Right cardiac atrium (tissue), 5 donors: ENCODE measurements at regions of chr19 and their contacts with region 1.

Region 1: GRCh38 chr19:44903602-44904425 is 1.8 kb upstream of the APOE start:
- DNase-seq: peak; percentile 66 to 90 (median 89)
- ATAC-seq: peak; percentile 58 to 67
- H3K4me3 ChIP-seq: no peak overlapping the region
- H3K27ac ChIP-seq: no peak overlapping the region
- H3K4me1 ChIP-seq: no peaks in the 10 kb centered on the region
- H3K27me3 ChIP-seq: no peaks in the 10 kb centered on the region

Region 2: GRCh38 chr19:44677019-44677821 is 226.6 kb before region 1 on chr19:
- intact Hi-C with region 1: no loop called
- DNase-seq: no peak
- ATAC-seq: no peak
- H3K4me3 ChIP-seq: no peak overlapping the region
- H3K27ac ChIP-seq: no peak overlapping the region
- H3K4me1 ChIP-seq: no peaks in the 10 kb centered on the region
- H3K27me3 ChIP-seq: no peaks in the 10 kb centered on the region

Region 3: DNA sequence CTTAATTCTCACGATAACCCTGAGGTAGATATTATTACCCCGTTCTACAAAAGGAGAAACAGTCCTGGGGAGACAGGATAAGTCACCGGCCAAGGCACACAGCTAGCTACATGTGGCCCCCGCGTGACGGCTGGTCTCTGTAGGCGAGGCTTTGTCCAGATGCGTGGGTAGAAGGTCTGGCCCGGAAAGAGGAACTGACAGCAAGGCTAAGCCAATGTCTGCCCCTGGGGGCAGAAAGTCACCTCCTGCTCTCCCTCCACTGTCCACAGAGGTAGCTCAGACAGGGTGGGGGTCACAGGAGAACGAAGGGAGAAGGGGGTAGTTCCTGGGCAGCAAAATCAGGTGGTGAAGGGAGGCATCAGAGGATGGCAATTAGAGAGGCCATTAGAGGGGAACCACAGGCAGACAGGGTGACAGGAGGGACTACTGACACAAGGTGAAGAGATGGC is 40.0 kb after region 1 on chr19:
- intact Hi-C with region 1: loop called in 2 of 4 experiments (anchors 5 kb)
- DNase-seq: peak in 2 of 3 donors; percentile 72 to 76
- ATAC-seq: peak; percentile 36 to 40
- H3K4me3 ChIP-seq: no peak overlapping the region
- H3K27ac ChIP-seq: no peak overlapping the region
- H3K4me1 ChIP-seq: peaks cover 1% of the 10 kb centered on the region
- H3K27me3 ChIP-seq: no peaks in the 10 kb centered on the region

Region 4: DNA sequence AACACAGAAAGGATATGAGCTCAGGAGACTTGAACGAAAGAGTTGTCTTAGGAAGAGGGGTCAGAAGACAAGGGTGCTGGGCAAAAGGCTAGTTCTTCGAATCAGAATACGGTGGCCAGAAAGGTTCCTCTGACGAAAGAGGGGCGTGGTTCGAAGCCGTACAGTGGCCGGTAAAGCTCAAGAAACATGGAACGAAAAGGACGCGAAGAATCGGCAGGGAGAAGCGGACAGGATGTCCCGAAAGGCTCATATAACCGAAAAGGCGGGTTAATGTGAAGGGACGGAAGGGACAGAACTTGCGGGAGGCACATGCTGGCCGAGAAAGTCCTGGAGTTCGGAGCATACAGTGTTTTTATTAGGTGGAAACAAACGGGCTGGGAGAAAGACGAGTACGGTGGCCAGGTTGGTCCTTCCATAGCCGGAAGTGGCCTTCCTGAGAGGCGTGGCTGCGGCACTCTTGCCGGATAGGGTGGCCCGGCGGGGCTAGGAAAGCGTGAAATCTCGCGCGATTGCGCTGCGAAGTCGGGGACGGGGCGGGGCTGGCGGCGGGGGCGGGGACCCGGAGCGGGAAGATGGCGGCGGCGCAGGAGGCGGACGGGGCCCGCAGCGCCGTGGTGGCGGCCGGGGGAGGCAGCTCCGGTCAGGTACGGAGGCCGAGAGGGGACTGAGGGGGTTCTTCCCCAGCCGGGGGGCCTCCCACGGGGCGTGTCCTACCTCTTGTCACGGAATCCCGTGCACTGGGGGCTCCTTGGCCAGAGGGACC is 51.2 kb after region 1 on chr19 and contains the start of gene CLPTM1:
- intact Hi-C with region 1: loop called in 3 of 4 experiments (anchors 5 kb)
- DNase-seq: peak; percentile 98 to 99 (median 99)
- ATAC-seq: peak; percentile 95 to 97
- H3K4me3 ChIP-seq: peak within 1 kb of the TSS; percentile 93
- H3K27ac ChIP-seq: peak within 1 kb of the TSS; percentile 97
- H3K4me1 ChIP-seq: peaks cover 5% of the 10 kb centered on the region
- H3K27me3 ChIP-seq: no peaks in the 10 kb centered on the region
- total RNA-seq, gene CLPTM1: 81.4 to 106 (median 93.0) TPM

Region 5: DNA sequence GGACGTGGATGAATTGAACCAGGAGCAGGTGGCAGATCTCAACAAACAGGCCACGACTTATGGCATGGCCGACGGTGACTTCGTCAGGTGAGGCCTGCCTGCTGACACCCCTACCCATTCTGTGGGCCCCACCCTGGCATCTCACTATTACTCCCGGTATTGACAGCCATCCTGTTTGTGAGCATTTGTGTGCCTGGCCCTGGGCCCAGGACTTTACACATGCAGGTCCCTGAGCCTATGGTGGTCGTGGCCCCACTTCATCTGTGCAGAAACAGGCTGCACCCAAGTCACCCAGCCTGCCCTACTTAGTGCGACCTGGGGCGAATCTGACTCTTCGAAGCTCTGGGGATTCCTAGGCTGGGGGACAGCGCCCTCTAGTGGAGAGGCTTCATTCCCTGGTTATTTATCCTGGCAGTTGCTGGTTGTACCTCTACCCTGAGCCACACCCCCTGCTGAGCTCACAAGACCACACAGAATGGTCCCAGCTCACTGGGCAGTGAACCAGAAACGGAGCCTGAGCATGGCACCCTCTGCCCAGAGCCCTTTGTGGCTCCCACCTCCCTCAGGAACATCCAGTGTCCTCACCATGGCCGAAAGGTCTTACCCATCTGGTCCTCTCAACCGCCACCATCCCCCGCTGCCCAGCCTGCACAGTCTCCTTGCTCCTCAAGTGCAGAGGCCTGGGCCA is 155.6 kb after region 1 on chr19:
- intact Hi-C with region 1: loop called in 2 of 4 experiments (anchors 10 kb)
- DNase-seq: peak; percentile 66 to 78 (median 77)
- ATAC-seq: peak; percentile 47 to 57
- H3K4me3 ChIP-seq: no peak overlapping the region
- H3K27ac ChIP-seq: no peak overlapping the region
- H3K4me1 ChIP-seq: no peaks in the 10 kb centered on the region
- H3K27me3 ChIP-seq: no peaks in the 10 kb centered on the region

Region 6: DNA sequence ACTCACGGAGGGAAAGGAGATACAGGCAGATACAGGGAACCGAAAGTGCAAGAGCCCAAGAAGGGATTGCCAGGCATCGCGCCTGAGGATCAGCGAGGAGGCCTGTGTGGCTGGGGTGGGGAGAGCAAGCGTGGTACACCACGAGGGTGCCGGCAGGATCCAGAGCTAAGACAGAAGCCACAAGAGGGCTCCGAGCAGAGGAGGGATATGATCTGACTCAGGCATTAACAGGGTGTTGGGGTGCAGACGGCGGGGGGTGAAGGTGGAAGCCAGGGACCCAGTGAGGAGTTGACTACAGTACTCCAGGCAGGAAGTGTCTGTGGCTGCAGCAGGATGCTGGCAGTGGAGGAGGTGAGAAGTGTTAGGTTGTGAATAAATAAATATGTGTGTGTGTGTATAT is 183.7 kb after region 1 on chr19:
- intact Hi-C with region 1: no loop called
- DNase-seq: peak in 1 of 3 donors; percentile 57
- ATAC-seq: no peak
- H3K4me3 ChIP-seq: no peak overlapping the region
- H3K27ac ChIP-seq: no peak overlapping the region
- H3K4me1 ChIP-seq: no peaks in the 10 kb centered on the region
- H3K27me3 ChIP-seq: no peaks in the 10 kb centered on the region